K562 (cell line): ENCODE measurements at regions of chr1 and their contacts with region 1.

Region 1: GRCh38 chr1:179990847-179991246 is 36.2 kb downstream of the CEP350 start:
- DNase-seq: no peak
- ATAC-seq: peak; percentile 20; the same call in 1 of the 3 replicates
- H3K4me3 ChIP-seq: no peak overlapping the region
- H3K27ac ChIP-seq: no peak overlapping the region
- H3K4me1 ChIP-seq: no peaks in the 10 kb centered on the region
- H3K27me3 ChIP-seq: no peaks in the 10 kb centered on the region
- CTCF ChIP-seq: no peak
- EP300 ChIP-seq: no peak
- POLR2A ChIP-seq: no peak
- RAD21 ChIP-seq: no peak

Region 2: GRCh38 chr1:179926494-179927205 is 64.2 kb before region 1 on chr1:
- CTCF ChIA-PET with region 1: no interaction called
- POLR2A ChIA-PET with region 1: no interaction called
- in situ Hi-C with region 1: no loop called
- intact Hi-C with region 1: no loop called
- DNase-seq: no peak
- ATAC-seq: no peak
- H3K4me3 ChIP-seq: no peak overlapping the region
- H3K27ac ChIP-seq: no peak overlapping the region
- H3K4me1 ChIP-seq: peaks cover 0 to 6% of the 10 kb centered on the region in 2 experiments; a peak in 1 of 5 replicates
- H3K27me3 ChIP-seq: no peaks in the 10 kb centered on the region
- CTCF ChIP-seq: no peak
- EP300 ChIP-seq: no peak
- POLR2A ChIP-seq: no peak
- RAD21 ChIP-seq: no peak

Region 3: DNA sequence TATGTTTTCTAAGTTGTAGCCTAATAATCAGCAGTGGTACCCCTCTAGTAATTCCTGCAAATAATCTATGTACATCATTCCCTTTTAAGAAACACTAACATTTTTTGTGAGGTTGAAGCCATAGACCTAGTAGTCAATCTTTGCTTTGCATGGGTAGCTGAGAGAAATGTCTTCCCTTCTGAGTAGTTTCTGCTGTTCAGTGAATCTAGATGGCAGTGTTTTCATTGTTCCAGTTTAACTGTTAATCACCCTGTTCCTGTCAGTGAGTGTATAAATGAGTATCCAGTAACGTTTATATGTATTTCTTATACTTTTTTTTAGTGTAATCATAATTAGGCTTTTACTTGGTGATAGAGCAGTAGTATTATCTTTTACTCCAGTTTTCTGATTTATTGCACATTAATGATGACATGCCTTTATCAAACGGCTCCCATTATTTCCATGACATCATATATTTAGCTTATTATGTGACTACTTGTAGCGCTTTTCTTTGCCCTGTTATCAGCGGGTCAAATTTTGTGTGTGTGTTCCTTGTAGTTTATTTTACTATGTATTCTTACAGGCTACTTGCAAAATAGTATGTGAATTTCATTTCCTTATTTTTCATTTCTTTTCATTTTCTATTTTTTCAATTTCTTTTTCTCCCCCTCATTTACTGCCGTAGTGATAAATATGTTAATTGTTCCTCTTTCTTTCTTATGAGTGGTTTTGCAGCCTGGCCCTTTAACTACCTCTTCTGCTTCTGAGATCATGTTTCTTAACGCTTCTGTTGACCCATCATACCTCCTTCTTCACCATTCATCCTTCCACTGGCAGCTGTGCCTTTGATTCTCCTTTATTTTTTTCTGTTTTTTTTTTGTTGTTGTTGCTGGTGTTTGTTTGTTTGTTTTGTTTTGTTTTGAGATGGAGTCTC is 17.4 kb before region 1 on chr1:
- CTCF ChIA-PET with region 1: no interaction called
- POLR2A ChIA-PET with region 1: interaction called, 10 read pairs
- in situ Hi-C with region 1: no loop called
- intact Hi-C with region 1: no loop called
- DNase-seq: no peak
- ATAC-seq: no peak
- H3K4me3 ChIP-seq: no peak overlapping the region
- H3K27ac ChIP-seq: no peak overlapping the region
- H3K4me1 ChIP-seq: peaks cover 20 to 30% of the 10 kb centered on the region in 2 experiments; a peak in 4 of 5 replicates
- H3K27me3 ChIP-seq: no peaks in the 10 kb centered on the region
- CTCF ChIP-seq: no peak
- EP300 ChIP-seq: no peak
- POLR2A ChIP-seq: no peak
- RAD21 ChIP-seq: no peak